ENCODE measurements at regions of chr1 and their contacts with region 1.

Region 1: DNA sequence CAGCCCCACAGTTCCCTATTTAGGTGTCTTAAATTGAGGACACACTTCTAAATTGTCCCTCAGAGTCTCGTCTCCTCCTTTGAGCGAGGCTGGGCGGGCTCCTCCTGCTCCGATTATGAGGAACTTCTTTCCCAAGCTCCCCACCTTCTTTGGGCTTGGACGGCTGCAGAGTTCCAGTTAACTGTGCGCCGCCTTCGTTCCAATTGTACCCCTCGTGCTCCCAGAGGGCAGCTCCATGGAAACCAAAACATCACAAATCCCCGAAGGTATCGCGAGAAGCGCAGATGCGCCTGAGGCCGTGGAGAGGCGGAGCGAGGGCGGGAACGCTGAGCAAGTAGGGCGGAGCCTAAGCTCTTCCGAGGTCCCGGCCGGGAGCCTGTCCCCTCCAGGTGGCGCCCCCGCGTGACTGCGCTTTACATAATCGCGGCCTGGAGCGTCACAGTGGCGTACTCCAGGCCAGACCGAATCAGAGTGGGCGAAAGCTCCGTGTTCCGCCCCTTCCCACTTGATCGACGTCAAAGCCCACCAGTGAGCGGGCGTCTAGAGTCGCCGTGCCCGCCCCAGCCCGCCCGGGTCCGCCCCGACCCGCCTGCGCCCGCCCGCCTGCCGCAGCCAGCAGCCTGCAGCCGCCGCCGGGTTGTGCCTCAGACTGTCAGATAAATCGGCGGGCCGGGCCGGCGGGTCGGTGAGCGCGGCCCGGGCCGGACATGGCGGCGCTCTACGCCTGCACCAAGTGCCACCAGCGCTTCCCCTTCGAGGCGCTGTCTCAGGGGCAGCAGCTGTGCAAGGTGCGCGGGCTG is at the start of gene FAM76A:
- DNase-seq: peak; percentile 99
- H3K4me3 Mint-ChIP-seq: peak within 1 kb of the TSS; percentile 85
- H3K27ac Mint-ChIP-seq: peak within 1 kb of the TSS; percentile 99
- H3K4me1 Mint-ChIP-seq: peaks cover 14% of the 10 kb centered on the region
- H3K27me3 Mint-ChIP-seq: no peaks in the 10 kb centered on the region
- total RNA-seq, gene FAM76A: 13.6 and 14.0 TPM in 2 replicates

Region 2: DNA sequence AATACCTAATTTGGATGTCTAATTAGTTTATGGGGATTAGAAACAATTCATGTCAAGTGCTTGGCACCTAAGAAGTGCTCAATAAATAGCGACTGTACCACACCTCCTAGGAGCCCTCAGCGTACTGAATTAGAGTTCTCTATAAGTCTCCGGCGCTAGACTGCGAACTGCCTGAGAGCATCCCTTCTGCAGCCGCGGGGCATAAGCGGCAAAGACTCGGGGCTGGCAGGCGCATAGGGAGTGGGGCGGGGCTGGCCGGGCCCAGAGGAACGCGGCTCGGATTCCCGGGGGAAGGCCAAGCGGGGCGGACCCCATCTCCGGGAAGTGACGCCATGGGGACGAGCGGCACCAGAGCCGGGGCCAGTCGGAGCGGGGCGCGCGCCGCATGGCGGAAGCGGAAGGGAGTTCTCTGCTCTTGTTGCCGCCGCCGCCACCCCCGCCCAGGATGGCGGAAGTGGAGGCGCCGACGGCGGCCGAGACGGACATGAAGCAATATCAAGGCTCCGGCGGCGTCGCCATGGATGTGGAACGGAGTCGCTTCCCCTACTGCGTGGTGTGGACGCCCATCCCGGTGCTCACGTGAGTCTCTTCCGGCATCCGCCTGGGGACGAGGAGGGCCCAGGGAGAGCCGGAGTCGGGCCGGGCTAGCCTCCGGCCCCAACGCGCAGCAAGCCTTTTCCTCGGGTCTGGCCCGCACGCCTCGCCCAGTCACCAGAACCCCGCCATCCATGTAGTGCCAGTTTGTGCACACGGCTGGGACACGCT is 403.6 kb before region 1 on chr1 and contains the start of gene TMEM222:
- intact Hi-C with region 1: loop called (anchors 2 kb)
- DNase-seq: peak; percentile 97
- H3K4me3 Mint-ChIP-seq: peak within 1 kb of the TSS; percentile 97
- H3K27ac Mint-ChIP-seq: peak within 1 kb of the TSS; percentile 90
- H3K4me1 Mint-ChIP-seq: peaks cover 24% of the 10 kb centered on the region
- H3K27me3 Mint-ChIP-seq: peaks cover 3% of the 10 kb centered on the region
- total RNA-seq, gene TMEM222: 32.1 and 35.7 TPM in 2 replicates

Region 3: DNA sequence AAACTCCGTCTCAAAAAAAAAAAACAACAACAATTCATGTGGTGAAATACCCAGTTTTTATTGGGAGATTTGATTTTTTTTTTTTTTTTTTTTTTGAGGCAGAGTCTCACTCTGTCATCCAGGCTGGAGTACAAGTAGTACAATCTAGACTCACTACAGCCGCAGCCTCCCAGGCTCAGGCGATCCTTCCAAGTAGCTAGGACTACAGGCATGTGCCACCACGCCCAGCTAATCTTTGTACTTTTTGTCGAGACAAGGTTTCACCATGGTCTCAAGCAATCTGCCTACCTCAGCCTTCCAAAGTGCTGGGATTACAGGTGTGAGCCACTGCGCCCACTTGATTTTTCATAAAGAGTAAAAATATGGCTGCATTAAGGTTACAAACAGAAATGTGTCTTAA is 15.5 kb after region 1 on chr1:
- intact Hi-C with region 1: no loop called
- DNase-seq: no peak
- H3K4me3 Mint-ChIP-seq: no peak overlapping the region
- H3K27ac Mint-ChIP-seq: no peak overlapping the region
- H3K4me1 Mint-ChIP-seq: no peaks in the 10 kb centered on the region
- H3K27me3 Mint-ChIP-seq: no peaks in the 10 kb centered on the region

Region 4: GRCh38 chr1:27830621-27831424 is 105.2 kb after region 1 on chr1 and contains the start of gene PPP1R8:
- intact Hi-C with region 1: loop called (anchors 2 kb)
- DNase-seq: peak; percentile 83
- H3K4me3 Mint-ChIP-seq: peak within 1 kb of the TSS; percentile 96
- H3K27ac Mint-ChIP-seq: peak within 1 kb of the TSS; percentile 93
- H3K4me1 Mint-ChIP-seq: peaks cover 26% of the 10 kb centered on the region
- H3K27me3 Mint-ChIP-seq: no peaks in the 10 kb centered on the region
- total RNA-seq, gene PPP1R8: 67.3 and 71.8 TPM in 2 replicates

Measured in activated T-helper 2 cell treated with anti-CD3 and anti-CD28 coated beads, Interferon-gamma antibody, Interleukin-2, Interleukin-4, amounts not matched to agents 10 μg/mL and 5 μg/mL and 100 μg/mL, durations not matched to agents 14 hours and 24 hours and 36 hours (primary cell).